Endothelial cell of umbilical vein (primary cell): ENCODE measurements at regions of chr5 and their contacts with region 1.

Region 1: GRCh38 chr5:42908509-42909488 is 97.1 kb upstream of the SELENOP start:
- DNase-seq: peak; percentile 87
- H3K4me3 ChIP-seq: peak overlapping the region; percentile 31 to 75 (median 41)
- H3K27ac ChIP-seq: no peak overlapping the region
- H3K4me1 ChIP-seq: peaks cover 5% of the 10 kb centered on the region
- H3K27me3 ChIP-seq: peaks cover 23 to 34% of the 10 kb centered on the region in 2 experiments
- CTCF ChIP-seq: peak; percentile 75 to 78
- POLR2A ChIP-seq: no peak

Region 2: DNA sequence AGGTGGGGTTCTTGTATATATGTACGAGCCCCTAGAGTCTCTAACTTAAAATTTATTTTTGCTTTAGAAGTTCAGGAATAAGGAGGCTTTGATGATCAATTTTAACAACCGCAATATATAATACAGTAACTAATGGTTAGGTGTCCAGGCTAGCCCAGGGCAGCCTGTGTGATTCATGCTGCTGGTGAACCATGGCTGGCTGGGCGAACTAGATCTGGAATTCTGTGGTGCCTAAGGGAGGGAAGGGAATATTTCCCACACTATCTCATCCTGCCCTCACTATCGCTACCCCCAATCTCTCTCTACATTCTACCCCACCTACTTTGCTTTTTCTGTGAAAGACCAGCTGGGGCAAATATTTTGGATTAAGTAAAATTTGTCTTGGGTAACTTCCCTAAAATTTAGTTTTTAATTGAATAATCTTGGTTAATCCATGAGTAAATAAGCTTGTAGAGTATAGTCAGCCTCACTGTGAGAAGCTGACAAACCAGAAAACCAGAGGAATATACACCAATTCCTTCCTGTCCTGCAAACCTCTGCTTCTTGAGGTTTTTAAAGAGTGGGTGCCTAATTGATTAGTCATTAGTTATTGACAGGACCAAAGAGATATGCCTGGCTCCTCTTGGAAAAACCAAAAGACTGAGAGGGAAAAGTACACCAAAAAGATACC is 267.3 kb before region 1 on chr5:
- CTCF ChIA-PET with region 1: no interaction called
- POLR2A ChIA-PET with region 1: no interaction called
- dilution Hi-C with region 1: no loop called
- intact Hi-C with region 1: no loop called
- DNase-seq: no peak
- H3K4me3 ChIP-seq: no peak overlapping the region
- H3K27ac ChIP-seq: no peak overlapping the region
- H3K4me1 ChIP-seq: no peaks in the 10 kb centered on the region
- H3K27me3 ChIP-seq: no peaks in the 10 kb centered on the region
- CTCF ChIP-seq: no peak
- POLR2A ChIP-seq: no peak

Region 3: DNA sequence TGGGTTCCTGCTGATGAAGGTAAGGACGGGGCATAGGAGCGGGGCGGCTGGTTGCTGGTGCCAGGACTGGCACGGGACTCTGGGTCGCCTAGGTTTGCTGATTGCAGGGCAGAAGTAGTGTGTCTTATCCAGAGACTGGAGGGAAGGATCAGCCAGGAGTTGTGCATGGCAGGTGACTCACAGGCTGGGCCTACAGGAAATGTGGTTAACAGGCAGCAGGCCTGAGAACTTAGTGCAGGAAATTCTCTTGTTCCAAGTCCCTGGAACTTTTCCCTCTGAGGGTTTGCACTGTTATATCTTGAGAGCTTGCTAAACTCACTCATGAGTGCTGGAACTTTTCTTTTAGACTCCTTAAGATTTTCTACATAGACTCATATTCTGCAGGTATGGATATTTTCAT is 36.2 kb after region 1 on chr5:
- CTCF ChIA-PET with region 1: interaction called, 127 read pairs
- POLR2A ChIA-PET with region 1: no interaction called
- dilution Hi-C with region 1: no loop called
- intact Hi-C with region 1: loop called (anchors 1 kb)
- DNase-seq: peak; percentile 90
- H3K4me3 ChIP-seq: no peak overlapping the region
- H3K27ac ChIP-seq: peak overlapping the region; percentile 22
- H3K4me1 ChIP-seq: peaks cover 23% of the 10 kb centered on the region
- H3K27me3 ChIP-seq: no peaks in the 10 kb centered on the region
- CTCF ChIP-seq: no peak
- POLR2A ChIP-seq: no peak

Region 4: GRCh38 chr5:43008369-43009153 is 99.8 kb after region 1 on chr5:
- CTCF ChIA-PET with region 1: interaction called, 37 read pairs
- POLR2A ChIA-PET with region 1: no interaction called
- dilution Hi-C with region 1: no loop called
- intact Hi-C with region 1: loop called (anchors 1 kb)
- DNase-seq: peak; percentile 96
- H3K4me3 ChIP-seq: peak overlapping the region; percentile 45 to 77 (median 75)
- H3K27ac ChIP-seq: peak overlapping the region; percentile 90
- H3K4me1 ChIP-seq: peaks cover 26% of the 10 kb centered on the region
- H3K27me3 ChIP-seq: no peaks in the 10 kb centered on the region
- CTCF ChIP-seq: peak in 1 of 2 donors; percentile 28
- POLR2A ChIP-seq: peak; percentile 66

Region 5: GRCh38 chr5:43066799-43067741 is 158.3 kb after region 1 on chr5:
- CTCF ChIA-PET with region 1: interaction called, 37 read pairs
- POLR2A ChIA-PET with region 1: interaction called, 3 read pairs
- dilution Hi-C with region 1: no loop called
- intact Hi-C with region 1: loop called (anchors 1 kb)
- DNase-seq: peak; percentile 91
- H3K4me3 ChIP-seq: peak overlapping the region; percentile 24 to 76 (median 76)
- H3K27ac ChIP-seq: peak overlapping the region; percentile 86
- H3K4me1 ChIP-seq: peaks cover 24% of the 10 kb centered on the region
- H3K27me3 ChIP-seq: no peaks in the 10 kb centered on the region
- CTCF ChIP-seq: no peak
- POLR2A ChIP-seq: peak; percentile 73

Region 6: DNA sequence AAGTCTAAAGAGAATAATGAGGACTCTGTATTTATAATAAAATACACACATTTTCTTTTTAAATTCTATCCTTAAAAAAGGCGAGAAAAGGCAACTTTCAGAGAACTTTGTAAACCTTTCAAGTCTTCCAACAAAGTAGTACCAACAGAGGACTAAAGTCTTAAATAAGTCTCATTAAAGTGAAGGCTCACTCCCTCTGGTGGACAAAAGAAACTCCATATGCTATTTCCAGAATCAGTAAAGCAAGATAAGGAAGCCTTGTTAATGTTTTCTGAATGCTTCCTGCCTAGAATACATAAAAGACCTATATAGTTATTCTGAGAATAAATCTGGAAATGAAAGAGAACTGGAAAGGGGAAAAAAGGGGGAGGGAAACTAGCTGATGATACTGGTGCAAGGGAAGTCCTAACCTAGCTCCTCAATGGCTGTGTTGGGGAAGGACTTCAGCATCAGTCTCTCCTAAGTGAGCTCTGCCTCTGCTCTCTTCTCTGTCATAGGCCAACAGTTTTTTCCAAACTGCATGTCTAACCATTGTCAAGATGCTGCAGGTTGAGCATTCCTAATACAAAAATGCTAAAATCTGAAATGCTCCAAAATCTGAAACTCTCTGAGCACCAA is 397.3 kb after region 1 on chr5:
- CTCF ChIA-PET with region 1: interaction called, 10 read pairs
- POLR2A ChIA-PET with region 1: no interaction called
- dilution Hi-C with region 1: no loop called
- intact Hi-C with region 1: loop called (anchors 5 kb)
- DNase-seq: peak; percentile 71
- H3K4me3 ChIP-seq: no peak overlapping the region
- H3K27ac ChIP-seq: no peak overlapping the region
- H3K4me1 ChIP-seq: peaks cover 19% of the 10 kb centered on the region
- H3K27me3 ChIP-seq: no peaks in the 10 kb centered on the region
- CTCF ChIP-seq: peak; percentile 39 to 43
- POLR2A ChIP-seq: no peak